H1 (cell line): ENCODE measurements at regions of chr3 and their contacts with region 1.

Region 1: DNA sequence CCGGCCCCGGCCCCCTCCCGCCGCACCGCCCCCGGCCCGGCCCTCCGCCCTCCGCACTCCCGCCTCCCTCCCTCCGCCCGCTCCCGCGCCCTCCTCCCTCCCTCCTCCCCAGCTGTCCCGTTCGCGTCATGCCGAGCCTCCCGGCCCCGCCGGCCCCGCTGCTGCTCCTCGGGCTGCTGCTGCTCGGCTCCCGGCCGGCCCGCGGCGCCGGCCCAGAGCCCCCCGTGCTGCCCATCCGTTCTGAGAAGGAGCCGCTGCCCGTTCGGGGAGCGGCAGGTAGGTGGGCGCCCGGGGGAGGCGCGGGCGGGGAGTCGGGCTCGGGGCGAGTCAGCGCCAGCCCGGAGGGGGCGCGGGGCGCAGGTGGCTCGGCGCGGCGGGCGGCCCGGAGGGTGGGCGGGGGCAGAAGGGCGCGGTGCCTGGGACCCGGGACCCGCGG is 355 bp downstream of the CHRD start:
- DNase-seq: peak in 1 of 2 experiments; percentile 79
- H3K4me3 ChIP-seq: peak overlapping the region; percentile 32 to 71 (median 54); a peak in 7 of 8 replicates
- H3K27ac ChIP-seq: no peak overlapping the region
- H3K4me1 ChIP-seq: peaks cover 0 to 33% (median 27%) of the 10 kb centered on the region in 4 experiments; a peak in 6 of 7 replicates
- H3K27me3 ChIP-seq: peaks cover 31 to 55% (median 49%) of the 10 kb centered on the region in 4 experiments
- CTCF ChIP-seq: no peak
- EP300 ChIP-seq: no peak
- POLR2A ChIP-seq: no peak
- RAD21 ChIP-seq: no peak

Region 2: GRCh38 chr3:184314363-184314699 is 65.9 kb before region 1 on chr3 and contains the start of gene EIF4G1:
- CTCF ChIA-PET with region 1: no interaction called
- POLR2A ChIA-PET with region 1: no interaction called
- DNase-seq: peak; percentile 77 to 92
- H3K4me3 ChIP-seq: peak within 1 kb of the TSS; percentile 44 to 96 (median 77)
- H3K27ac ChIP-seq: peak within 1 kb of the TSS; percentile 82
- H3K4me1 ChIP-seq: peaks cover 3 to 9% (median 6%) of the 10 kb centered on the region in 4 experiments
- H3K27me3 ChIP-seq: no peaks in the 10 kb centered on the region
- CTCF ChIP-seq: no peak
- EP300 ChIP-seq: no peak
- POLR2A ChIP-seq: peak; percentile 83 to 86; a peak in 2 of 3 replicates
- RAD21 ChIP-seq: no peak
- total RNA-seq, gene EIF4G1: 473 and 480 TPM in 2 replicates

Region 3: DNA sequence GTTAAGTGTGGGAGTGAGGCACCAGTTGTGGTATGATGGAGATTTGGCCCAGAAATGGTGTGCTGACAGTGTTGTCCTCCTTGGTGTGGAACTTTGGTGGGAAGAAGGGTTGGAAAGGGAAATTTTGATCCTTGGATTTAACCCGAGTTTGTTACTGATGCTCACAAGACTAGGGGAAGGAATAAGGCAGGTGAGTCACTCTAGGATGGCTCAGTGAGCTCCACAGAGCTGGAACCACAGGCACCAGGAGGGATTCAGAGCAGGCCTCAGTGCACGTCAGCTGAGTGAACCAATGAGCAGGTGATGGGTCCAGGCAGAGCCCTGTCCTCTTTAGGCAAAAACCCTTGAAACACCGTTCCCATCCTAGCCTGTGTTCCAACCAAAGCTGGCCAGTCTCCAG is 11.1 kb after region 1 on chr3:
- CTCF ChIA-PET with region 1: interaction called, 78 read pairs
- POLR2A ChIA-PET with region 1: interaction called, 4 read pairs
- DNase-seq: no peak
- H3K4me3 ChIP-seq: no peak overlapping the region
- H3K27ac ChIP-seq: no peak overlapping the region
- H3K4me1 ChIP-seq: peaks cover 0 to 3% (median 0%) of the 10 kb centered on the region in 4 experiments; a peak in 2 of 7 replicates
- H3K27me3 ChIP-seq: no peaks in the 10 kb centered on the region; a peak in 3 of 7 replicates
- CTCF ChIP-seq: no peak
- EP300 ChIP-seq: no peak
- POLR2A ChIP-seq: no peak
- RAD21 ChIP-seq: no peak

Region 4: DNA sequence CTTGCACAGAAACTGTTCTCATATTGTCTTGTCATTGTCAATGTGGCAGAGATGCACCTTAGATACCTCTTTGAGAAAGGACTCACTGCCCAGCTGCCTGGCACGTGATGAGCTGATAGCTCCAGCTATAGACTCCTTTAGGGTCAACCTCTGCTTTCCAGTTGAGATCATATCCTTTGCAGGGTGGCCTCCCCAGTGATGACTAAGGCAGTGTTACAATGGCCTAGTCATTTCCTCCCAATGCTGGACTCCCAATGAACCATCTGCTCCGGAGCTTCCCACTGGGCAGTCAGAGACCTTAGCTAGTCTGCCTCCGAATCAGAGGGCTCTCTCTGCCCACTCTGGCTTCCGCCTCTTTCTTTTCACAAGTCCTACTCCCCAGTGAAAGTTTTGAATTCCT is 79.1 kb after region 1 on chr3:
- CTCF ChIA-PET with region 1: interaction called, 10 read pairs
- POLR2A ChIA-PET with region 1: no interaction called
- DNase-seq: no peak
- H3K4me3 ChIP-seq: no peak overlapping the region
- H3K27ac ChIP-seq: no peak overlapping the region
- H3K4me1 ChIP-seq: no peaks in the 10 kb centered on the region
- H3K27me3 ChIP-seq: no peaks in the 10 kb centered on the region
- CTCF ChIP-seq: no peak
- EP300 ChIP-seq: no peak
- POLR2A ChIP-seq: no peak
- RAD21 ChIP-seq: no peak